ENCODE measurements at regions of chr9 and their contacts with region 1.

Region 1: GRCh38 chr9:81626506-81626905 is 62.8 kb downstream of the TLE1 start:
- DNase-seq: peak; percentile 75
- ATAC-seq: peak; percentile 43
- H3K4me3 ChIP-seq: no peak overlapping the region
- H3K27ac ChIP-seq: no peak overlapping the region
- H3K4me1 ChIP-seq: peaks cover 4% of the 10 kb centered on the region; the same call in 1 of the 2 replicates
- H3K27me3 ChIP-seq: no peaks in the 10 kb centered on the region
- CTCF ChIP-seq: no peak
- POLR2A ChIP-seq: no peak
- RAD21 ChIP-seq: no peak

Region 2: DNA sequence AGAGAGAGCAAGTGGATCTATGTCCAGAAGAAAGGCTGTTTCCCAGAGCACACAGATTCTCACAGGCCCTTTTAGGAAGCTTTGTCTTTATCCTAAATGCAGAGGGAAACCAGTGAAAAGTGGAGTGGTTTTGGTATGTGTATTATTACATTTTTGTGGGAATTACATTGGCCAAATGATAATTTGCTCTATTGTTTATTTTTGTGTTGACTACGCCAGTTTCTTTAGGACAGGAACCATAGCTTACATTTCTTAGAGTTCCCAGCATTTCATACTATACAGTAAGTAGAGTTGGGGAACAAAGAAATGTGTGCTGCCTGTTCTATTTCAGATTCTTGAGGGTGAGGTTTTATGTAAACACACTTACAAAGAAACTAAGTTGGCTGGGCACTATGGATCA is 272.3 kb after region 1 on chr9:
- CTCF ChIA-PET with region 1: no interaction called
- POLR2A ChIA-PET with region 1: interaction called, 10 read pairs
- dilution Hi-C with region 1: no loop called
- in situ Hi-C with region 1: no loop called
- intact Hi-C with region 1: no loop called
- DNase-seq: peak; percentile 73
- ATAC-seq: peak; percentile 79
- H3K4me3 ChIP-seq: no peak overlapping the region
- H3K27ac ChIP-seq: peak overlapping the region; percentile 30; the same call in 1 of the 2 replicates
- H3K4me1 ChIP-seq: peaks cover 3% of the 10 kb centered on the region
- H3K27me3 ChIP-seq: no peaks in the 10 kb centered on the region; the same call in 1 of the 2 replicates
- CTCF ChIP-seq: no peak
- POLR2A ChIP-seq: no peak
- RAD21 ChIP-seq: no peak

Measured in IMR-90 (cell line).